Caco-2 (cell line): ENCODE measurements at regions of chr1 and their contacts with region 1.

Region 1: GRCh38 chr1:216820345-216820744 is 97.1 kb upstream of the ESRRG start:
- DNase-seq: no peak
- H3K4me3 ChIP-seq: no peak overlapping the region
- H3K4me3 Mint-ChIP-seq: no peak overlapping the region
- H3K27ac Mint-ChIP-seq: no peak overlapping the region
- H3K4me1 ChIP-seq: 0 out of 2 replicates have a peak, but pooled peaks cover 8% of the 10 kb centered on the region
- H3K4me1 Mint-ChIP-seq: no peaks in the 10 kb centered on the region
- H3K27me3 ChIP-seq: no peaks in the 10 kb centered on the region
- H3K27me3 Mint-ChIP-seq: peaks cover 8% of the 10 kb centered on the region
- CTCF ChIP-seq: no peak

Region 2: GRCh38 chr1:216606047-216606637 is 214.2 kb before region 1 on chr1:
- CTCF ChIA-PET with region 1: no interaction called
- POLR2A ChIA-PET with region 1: no interaction called
- intact Hi-C with region 1: loop called (anchors 1 kb)
- DNase-seq: peak; percentile 50 to 69
- H3K4me3 ChIP-seq: no peak overlapping the region
- H3K4me3 Mint-ChIP-seq: peak overlapping the region; percentile 13
- H3K27ac Mint-ChIP-seq: no peak overlapping the region
- H3K4me1 ChIP-seq: peaks cover 48% of the 10 kb centered on the region
- H3K4me1 Mint-ChIP-seq: peaks cover 34% of the 10 kb centered on the region
- H3K27me3 ChIP-seq: no peaks in the 10 kb centered on the region
- H3K27me3 Mint-ChIP-seq: no peaks in the 10 kb centered on the region
- CTCF ChIP-seq: no peak

Region 3: DNA sequence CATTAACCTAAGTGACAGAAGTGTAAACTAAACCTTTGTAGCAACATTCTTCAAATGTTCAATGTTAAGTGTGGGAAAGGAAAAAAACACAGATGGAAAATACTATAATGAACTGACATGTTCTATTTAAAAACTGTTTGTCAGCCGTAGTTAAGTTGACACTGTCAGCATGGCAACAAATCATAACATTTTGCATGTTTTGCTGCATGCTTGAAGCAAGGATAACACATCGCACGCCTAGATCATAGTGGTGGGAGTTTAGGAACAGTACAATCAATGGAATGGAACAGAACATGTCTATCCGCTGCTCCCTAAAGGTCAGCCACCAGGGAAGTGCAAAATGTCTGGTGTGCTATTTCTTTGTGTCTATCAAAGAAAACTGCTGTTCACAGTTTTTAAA is 34.6 kb before region 1 on chr1:
- CTCF ChIA-PET with region 1: no interaction called
- POLR2A ChIA-PET with region 1: no interaction called
- intact Hi-C with region 1: no loop called
- DNase-seq: no peak
- H3K4me3 ChIP-seq: no peak overlapping the region
- H3K4me3 Mint-ChIP-seq: no peak overlapping the region
- H3K27ac Mint-ChIP-seq: no peak overlapping the region
- H3K4me1 ChIP-seq: no peaks in the 10 kb centered on the region
- H3K4me1 Mint-ChIP-seq: no peaks in the 10 kb centered on the region
- H3K27me3 ChIP-seq: no peaks in the 10 kb centered on the region
- H3K27me3 Mint-ChIP-seq: peaks cover 5% of the 10 kb centered on the region
- CTCF ChIP-seq: no peak

Region 4: GRCh38 chr1:216849146-216849545 is 28.8 kb after region 1 on chr1:
- CTCF ChIA-PET with region 1: no interaction called
- POLR2A ChIA-PET with region 1: no interaction called
- intact Hi-C with region 1: loop called (anchors 1 kb)
- DNase-seq: peak; percentile 45 to 47
- H3K4me3 ChIP-seq: no peak overlapping the region
- H3K4me3 Mint-ChIP-seq: no peak overlapping the region
- H3K27ac Mint-ChIP-seq: no peak overlapping the region
- H3K4me1 ChIP-seq: peaks cover 38% of the 10 kb centered on the region
- H3K4me1 Mint-ChIP-seq: peaks cover 12% of the 10 kb centered on the region
- H3K27me3 ChIP-seq: no peaks in the 10 kb centered on the region
- H3K27me3 Mint-ChIP-seq: no peaks in the 10 kb centered on the region
- CTCF ChIP-seq: no peak

Region 5: GRCh38 chr1:216904471-216904870 is 84.1 kb after region 1 on chr1:
- CTCF ChIA-PET with region 1: no interaction called
- POLR2A ChIA-PET with region 1: no interaction called
- intact Hi-C with region 1: loop called (anchors 1 kb)
- DNase-seq: peak; percentile 28 to 38
- H3K4me3 ChIP-seq: peak overlapping the region; percentile 29
- H3K4me3 Mint-ChIP-seq: peak overlapping the region; percentile 66
- H3K27ac Mint-ChIP-seq: peak overlapping the region; percentile 45
- H3K4me1 ChIP-seq: peaks cover 37% of the 10 kb centered on the region
- H3K4me1 Mint-ChIP-seq: peaks cover 32% of the 10 kb centered on the region
- H3K27me3 ChIP-seq: no peaks in the 10 kb centered on the region
- H3K27me3 Mint-ChIP-seq: no peaks in the 10 kb centered on the region
- CTCF ChIP-seq: no peak

Region 6: GRCh38 chr1:217343914-217344313 is 523.6 kb after region 1 on chr1:
- CTCF ChIA-PET with region 1: no interaction called
- POLR2A ChIA-PET with region 1: no interaction called
- intact Hi-C with region 1: loop called (anchors 10 kb)
- DNase-seq: no peak
- H3K4me3 ChIP-seq: no peak overlapping the region
- H3K4me3 Mint-ChIP-seq: no peak overlapping the region
- H3K27ac Mint-ChIP-seq: no peak overlapping the region
- H3K4me1 ChIP-seq: peaks cover 8% of the 10 kb centered on the region; the same call in 1 of the 2 replicates
- H3K4me1 Mint-ChIP-seq: peaks cover 14% of the 10 kb centered on the region
- H3K27me3 ChIP-seq: no peaks in the 10 kb centered on the region
- H3K27me3 Mint-ChIP-seq: no peaks in the 10 kb centered on the region
- CTCF ChIP-seq: no peak